Transverse colon (tissue), 4 donors: ENCODE measurements at regions of chr4 and their contacts with region 1.

Region 1: GRCh38 chr4:80184053-80184790 is 13.1 kb upstream of the PRDM8 start:
- DNase-seq: peak; percentile 89
- H3K4me3 ChIP-seq: peak overlapping the region; percentile 38 to 74 (median 46)
- H3K27ac ChIP-seq: peak overlapping the region; percentile 74 to 85 (median 76)
- H3K4me1 ChIP-seq: peaks cover 0 to 33% (median 26%) of the 10 kb centered on the region in 4 donors
- H3K27me3 ChIP-seq: peaks cover 58% of the 10 kb centered on the region
- CTCF ChIP-seq: peak; percentile 84 to 90 (median 89)
- EP300 ChIP-seq: no peak
- POLR2A ChIP-seq: no peak

Region 2: DNA sequence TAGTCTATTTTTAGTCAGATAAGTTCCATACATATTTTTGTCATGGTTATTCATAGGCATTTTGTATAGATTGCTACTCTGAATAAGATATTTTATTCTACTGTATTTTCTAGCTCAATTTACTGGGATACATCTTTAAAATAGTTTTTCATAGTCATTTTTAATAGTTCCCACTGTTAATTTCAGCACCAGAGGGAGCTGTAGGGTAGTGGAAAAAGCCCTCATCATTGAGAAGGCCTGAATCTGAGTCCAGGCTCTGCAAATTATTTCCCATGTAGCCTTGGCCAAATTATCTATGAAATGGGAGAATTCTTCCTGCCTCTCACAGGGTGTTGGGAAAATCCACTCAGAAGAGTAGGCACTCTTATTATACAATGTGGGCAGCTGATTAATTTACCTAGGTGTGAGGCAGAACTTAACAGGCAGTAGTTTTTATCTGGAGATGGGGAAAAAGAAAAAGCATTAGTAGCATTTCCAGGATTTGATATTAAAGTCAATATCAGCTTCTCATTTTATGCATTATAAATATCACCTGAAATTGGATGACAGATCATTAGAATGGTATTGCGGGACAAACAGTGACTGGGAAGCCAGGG is 1142.0 kb before region 1 on chr4:
- in situ Hi-C with region 1: no loop called
- intact Hi-C with region 1: loop called (anchors 10 kb)
- DNase-seq: no peak
- H3K4me3 ChIP-seq: no peak overlapping the region
- H3K27ac ChIP-seq: no peak overlapping the region
- H3K4me1 ChIP-seq: peaks cover 0 to 12% (median 2%) of the 10 kb centered on the region in 4 donors
- H3K27me3 ChIP-seq: no peaks in the 10 kb centered on the region
- CTCF ChIP-seq: peak; percentile 53 to 62 (median 55)
- EP300 ChIP-seq: no peak
- POLR2A ChIP-seq: no peak

Region 3: GRCh38 chr4:79823148-79823763 is 361.0 kb before region 1 on chr4:
- in situ Hi-C with region 1: no loop called
- intact Hi-C with region 1: loop called (anchors 10 kb)
- DNase-seq: peak; percentile 31
- H3K4me3 ChIP-seq: no peak overlapping the region
- H3K27ac ChIP-seq: peak overlapping the region; percentile 40 to 76 (median 49)
- H3K4me1 ChIP-seq: peaks cover 0 to 4% (median 0%) of the 10 kb centered on the region in 4 donors
- H3K27me3 ChIP-seq: no peaks in the 10 kb centered on the region
- CTCF ChIP-seq: no peak
- EP300 ChIP-seq: no peak
- POLR2A ChIP-seq: no peak

Region 4: DNA sequence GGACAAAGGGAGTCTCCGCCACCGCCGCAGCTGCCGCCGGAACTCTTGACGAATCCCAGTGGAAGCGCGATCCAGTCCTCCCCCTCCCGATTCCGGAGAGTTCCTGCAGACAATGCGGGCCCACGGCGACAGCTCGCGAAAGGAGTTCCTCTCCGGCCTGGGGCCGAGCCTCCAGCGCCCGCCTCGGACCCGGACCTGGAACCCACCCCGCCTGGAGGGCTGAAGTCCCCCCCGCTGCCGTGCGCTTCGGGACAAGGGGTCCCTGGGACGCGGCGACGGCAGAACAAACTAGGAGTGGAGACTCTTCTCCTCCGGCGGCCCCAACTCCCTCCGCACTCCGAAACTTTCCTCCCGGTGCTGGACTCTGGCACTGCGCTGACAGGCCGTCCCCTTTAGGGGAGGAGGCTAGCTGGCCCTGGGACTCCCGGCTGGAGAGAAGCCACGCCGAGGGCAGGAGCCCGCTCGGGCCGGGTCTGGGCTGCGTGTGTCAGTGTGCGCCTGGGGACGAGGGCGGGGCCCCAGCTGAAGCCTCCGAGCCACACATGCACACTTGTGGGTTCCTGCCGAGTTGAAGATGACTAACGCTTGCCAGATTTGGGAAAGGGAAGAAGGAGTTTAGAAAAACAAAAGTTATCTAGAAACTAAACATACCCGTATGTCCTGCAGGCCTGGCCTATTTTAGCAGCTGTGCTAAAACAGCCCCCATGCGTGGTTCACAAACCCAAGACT is 111.3 kb before region 1 on chr4 and contains the start of gene ANTXR2:
- in situ Hi-C with region 1: no loop called
- intact Hi-C with region 1: loop called (anchors 5 kb)
- DNase-seq: peak; percentile 92
- H3K4me3 ChIP-seq: peak within 1 kb of the TSS; percentile 84 to 95 (median 90)
- H3K27ac ChIP-seq: peak within 1 kb of the TSS; percentile 93 to 97 (median 96)
- H3K4me1 ChIP-seq: peaks cover 10 to 60% (median 32%) of the 10 kb centered on the region in 4 donors
- H3K27me3 ChIP-seq: no peaks in the 10 kb centered on the region
- CTCF ChIP-seq: peak in 2 of 5 experiments; percentile 13
- EP300 ChIP-seq: no peak
- POLR2A ChIP-seq: peak; percentile 93
- total RNA-seq, gene ANTXR2: 46.8 to 89.8 (median 76.0) TPM